WTC11 (cell line): ENCODE measurements at regions of chr7 and their contacts with region 1.

Region 1: DNA sequence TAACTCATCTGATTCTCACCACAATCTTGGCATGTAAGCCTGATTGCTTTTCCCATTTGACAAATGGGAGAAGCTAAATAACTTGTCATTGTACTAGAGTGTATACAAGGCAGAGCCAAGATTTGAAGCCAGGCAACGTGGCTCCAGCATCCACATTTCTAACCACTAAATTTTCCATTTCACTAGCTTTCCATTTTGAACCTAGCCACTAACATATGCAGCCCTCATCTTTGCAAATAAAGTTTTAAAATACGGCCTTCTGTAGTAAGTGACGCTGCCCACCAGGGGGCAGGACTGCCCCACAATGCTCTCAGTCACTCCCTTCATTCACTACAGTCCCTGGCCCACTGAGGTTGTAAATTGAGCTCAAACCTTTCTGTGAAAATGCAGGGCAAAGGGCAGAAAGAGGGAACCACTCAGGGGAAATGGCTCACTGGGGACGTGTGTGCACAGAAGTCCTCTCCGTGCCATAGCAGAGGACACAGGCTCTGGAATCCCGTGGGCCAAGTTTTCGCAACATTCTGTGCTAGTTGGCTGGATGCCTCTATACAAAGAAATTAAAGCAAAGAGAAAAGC is 315.7 kb downstream of the TNS3 start:
- DNase-seq: peak; percentile 64
- ATAC-seq: peak; percentile 97
- H3K4me3 Mint-ChIP-seq: no peak overlapping the region
- H3K27ac Mint-ChIP-seq: no peak overlapping the region
- H3K4me1 Mint-ChIP-seq: peaks cover 3% of the 10 kb centered on the region
- H3K27me3 Mint-ChIP-seq: no peaks in the 10 kb centered on the region
- CTCF ChIP-seq: peak; percentile 89

Region 2: DNA sequence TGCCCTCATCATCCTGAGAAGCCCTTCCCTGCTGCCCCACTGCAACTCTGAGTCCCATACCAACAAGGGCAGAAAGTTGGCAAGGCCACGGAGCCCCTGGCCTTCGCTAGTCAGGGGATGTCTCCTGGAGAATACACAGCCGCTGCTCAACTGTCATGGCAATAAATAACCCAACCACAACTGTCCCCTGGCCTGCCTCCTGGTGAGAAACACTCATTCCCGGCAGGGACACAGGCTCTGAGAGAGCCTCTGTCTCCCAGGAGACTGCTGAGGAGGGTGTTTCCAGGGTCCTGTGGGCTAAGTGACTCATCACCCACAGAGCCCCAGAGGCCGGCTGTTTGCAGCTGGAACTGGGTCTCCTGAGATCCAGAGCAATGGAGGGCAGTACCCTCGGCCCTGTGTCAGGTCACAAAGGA is 38.4 kb before region 1 on chr7:
- CTCF ChIA-PET with region 1: no interaction called
- POLR2A ChIA-PET with region 1: no interaction called
- DNase-seq: no peak
- ATAC-seq: no peak
- H3K4me3 Mint-ChIP-seq: no peak overlapping the region
- H3K27ac Mint-ChIP-seq: no peak overlapping the region
- H3K4me1 Mint-ChIP-seq: no peaks in the 10 kb centered on the region
- H3K27me3 Mint-ChIP-seq: no peaks in the 10 kb centered on the region
- CTCF ChIP-seq: no peak

Region 3: DNA sequence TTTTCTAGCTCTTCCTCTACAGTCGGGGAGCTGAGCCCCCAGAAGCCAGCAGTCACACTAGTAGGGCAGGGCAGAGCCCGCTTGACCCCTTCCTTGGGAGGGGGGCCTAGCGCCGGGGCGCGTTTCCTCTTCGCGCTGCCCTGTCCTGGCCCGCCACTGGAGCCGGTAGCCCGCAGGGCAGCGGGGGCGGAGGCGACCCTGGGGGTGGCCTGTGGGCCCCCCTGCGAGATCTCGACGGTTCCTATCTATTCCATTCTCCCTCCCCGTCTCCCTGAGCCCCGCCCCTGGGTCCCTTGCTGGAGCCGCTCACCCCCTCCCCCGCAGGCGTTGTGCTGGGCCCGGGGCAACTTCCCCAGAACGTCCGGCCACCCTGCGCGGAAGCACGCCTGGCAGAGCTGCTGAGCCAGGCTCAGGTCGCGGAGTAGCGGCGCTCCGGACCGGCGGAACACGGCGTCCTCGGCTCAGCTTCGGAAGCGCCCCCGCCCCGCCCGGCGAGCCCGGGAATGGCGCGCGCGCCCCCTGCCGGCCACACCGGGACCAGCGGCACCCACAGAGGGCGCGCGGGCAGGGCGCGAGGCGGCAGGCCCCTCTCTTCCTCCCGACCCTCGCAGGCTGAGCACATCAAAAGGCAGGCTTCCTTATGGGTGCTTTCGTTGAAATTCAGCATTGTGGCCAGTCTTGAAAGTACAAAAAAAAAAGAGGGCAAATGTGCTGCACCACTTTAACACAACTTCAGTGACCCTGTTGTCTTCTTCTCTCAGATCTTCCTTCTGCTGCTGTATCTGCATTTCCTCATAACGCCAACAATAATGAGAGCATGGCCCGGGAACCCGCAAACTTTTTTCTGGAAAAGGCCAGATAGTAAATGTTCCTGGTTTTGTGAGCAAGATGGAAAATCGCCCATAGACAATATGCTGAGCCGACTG is 11.9 kb before region 1 on chr7:
- CTCF ChIA-PET with region 1: interaction called, 25 read pairs
- POLR2A ChIA-PET with region 1: no interaction called
- DNase-seq: peak; percentile 81
- ATAC-seq: peak; percentile 94
- H3K4me3 Mint-ChIP-seq: peak overlapping the region; percentile 75
- H3K27ac Mint-ChIP-seq: no peak overlapping the region
- H3K4me1 Mint-ChIP-seq: peaks cover 8% of the 10 kb centered on the region
- H3K27me3 Mint-ChIP-seq: peaks cover 29% of the 10 kb centered on the region
- CTCF ChIP-seq: peak; percentile 72

Region 4: DNA sequence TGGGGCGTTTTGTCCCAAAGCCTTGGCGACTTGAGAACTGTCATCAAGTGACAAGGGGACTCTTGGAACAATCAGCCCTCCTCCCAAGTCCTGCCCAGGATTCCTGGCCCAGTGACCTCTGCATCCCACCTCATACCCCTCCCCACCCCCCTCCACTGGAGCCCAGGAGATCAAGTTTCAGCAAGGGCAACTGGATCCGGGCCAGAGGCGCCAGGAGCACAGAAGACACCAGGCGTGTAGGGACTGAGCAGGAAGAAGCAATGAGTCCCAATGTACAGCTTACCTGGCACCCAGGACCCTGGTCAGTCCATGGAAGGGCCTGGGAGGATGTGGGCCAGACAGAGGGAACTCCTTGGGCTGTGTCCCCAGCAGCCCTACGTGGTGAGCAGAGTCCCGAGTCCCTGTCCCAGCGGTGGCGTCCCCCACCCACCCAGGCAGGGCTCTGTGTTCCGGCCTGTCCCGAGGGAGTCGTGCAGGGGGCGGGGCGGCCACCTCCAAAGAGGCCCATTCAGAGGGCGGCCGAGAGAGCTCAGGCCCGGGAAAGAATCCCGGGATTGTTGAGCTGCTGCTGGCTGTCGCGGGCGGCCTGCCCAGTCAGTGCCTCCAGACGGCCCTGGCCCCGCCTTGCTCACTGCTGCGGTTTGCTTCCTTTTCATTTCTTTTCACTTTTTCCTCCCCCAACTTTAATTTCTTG is 61.6 kb after region 1 on chr7:
- CTCF ChIA-PET with region 1: interaction called, 11 read pairs
- POLR2A ChIA-PET with region 1: no interaction called
- DNase-seq: peak; percentile 87
- ATAC-seq: peak; percentile 79
- H3K4me3 Mint-ChIP-seq: peak overlapping the region; percentile 60
- H3K27ac Mint-ChIP-seq: peak overlapping the region; percentile 98
- H3K4me1 Mint-ChIP-seq: peaks cover 66% of the 10 kb centered on the region
- H3K27me3 Mint-ChIP-seq: no peaks in the 10 kb centered on the region
- CTCF ChIP-seq: no peak

Region 5: DNA sequence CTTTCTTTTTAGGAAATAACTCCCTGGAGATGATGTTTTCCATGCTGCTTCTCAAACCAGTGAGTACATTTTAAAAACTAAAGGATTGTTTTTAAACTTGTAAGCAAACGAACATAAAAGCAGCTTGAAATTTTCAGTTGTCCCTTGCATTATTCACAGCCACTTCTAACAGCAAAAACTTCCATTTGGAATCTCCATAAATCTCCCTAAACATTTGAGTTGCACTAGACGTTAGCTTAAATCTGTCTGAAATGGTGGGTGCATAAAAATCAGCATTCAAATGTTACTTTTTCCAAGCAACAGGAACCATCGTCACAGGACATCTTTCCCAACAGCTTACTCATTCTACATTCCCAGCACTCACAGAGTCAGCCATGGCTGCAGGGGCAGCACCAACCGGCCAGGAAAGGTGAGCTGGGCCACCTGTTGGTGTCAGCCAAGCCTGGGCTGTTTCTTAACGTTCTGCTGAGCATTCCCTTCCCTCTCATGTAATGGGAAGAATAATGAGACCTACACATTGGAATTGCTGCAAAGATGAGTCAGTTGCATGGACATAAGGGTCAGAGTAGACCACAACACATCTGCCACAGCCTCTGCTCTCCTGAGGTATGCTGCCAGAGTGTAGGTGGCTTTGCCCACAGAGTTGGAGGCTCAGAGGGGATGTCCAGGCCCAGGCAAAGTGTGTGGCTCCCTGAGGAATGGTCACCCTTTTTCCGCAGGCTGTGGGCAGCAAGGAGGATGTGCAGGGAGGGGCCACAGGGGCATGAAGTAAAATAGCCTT is 152.6 kb after region 1 on chr7:
- CTCF ChIA-PET with region 1: interaction called, 10 read pairs
- POLR2A ChIA-PET with region 1: no interaction called
- DNase-seq: no peak
- ATAC-seq: no peak
- H3K4me3 Mint-ChIP-seq: no peak overlapping the region
- H3K27ac Mint-ChIP-seq: no peak overlapping the region
- H3K4me1 Mint-ChIP-seq: peaks cover 10% of the 10 kb centered on the region
- H3K27me3 Mint-ChIP-seq: no peaks in the 10 kb centered on the region
- CTCF ChIP-seq: no peak

Region 6: GRCh38 chr7:47482013-47482875 is 216.0 kb after region 1 on chr7:
- CTCF ChIA-PET with region 1: interaction called, 11 read pairs
- POLR2A ChIA-PET with region 1: no interaction called
- DNase-seq: no peak
- ATAC-seq: no peak
- H3K4me3 Mint-ChIP-seq: no peak overlapping the region
- H3K27ac Mint-ChIP-seq: no peak overlapping the region
- H3K4me1 Mint-ChIP-seq: peaks cover 54% of the 10 kb centered on the region
- H3K27me3 Mint-ChIP-seq: peaks cover 88% of the 10 kb centered on the region
- CTCF ChIP-seq: no peak

Region 7: DNA sequence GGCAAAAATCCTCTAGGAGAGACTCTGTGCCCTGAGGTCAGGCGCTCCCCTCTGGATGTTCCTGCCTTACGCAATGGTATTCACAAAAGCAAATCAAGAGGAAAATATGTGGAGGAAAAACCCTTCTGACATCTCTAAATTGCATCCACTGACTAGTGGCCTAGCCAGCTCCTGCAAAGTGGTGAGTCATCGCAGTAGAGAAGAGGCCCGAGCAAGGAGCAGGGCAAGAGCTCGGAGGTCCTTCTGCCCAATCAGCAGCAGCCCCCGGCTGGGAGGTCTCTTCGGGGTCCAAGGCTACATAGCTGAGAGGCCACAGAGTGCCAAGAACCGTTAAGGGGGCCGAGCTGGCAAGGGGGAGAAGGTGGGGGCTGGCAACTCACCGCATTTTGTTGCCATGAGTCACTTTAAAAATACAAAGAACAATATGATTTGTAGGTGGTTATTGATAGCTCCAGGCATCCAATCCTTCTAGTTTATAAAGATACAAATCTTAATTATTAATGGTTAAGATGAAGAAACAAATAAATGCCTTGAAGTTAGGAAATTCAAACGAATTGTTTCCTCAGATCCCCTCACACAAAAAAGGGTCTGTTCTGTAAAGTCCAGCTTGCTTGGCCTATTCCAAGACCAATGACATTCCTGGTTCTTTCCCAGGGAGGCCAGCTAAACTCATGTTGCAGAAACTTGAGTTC is 520.5 kb after region 1 on chr7:
- CTCF ChIA-PET with region 1: interaction called, 12 read pairs
- POLR2A ChIA-PET with region 1: no interaction called
- DNase-seq: peak; percentile 25
- ATAC-seq: peak; percentile 93
- H3K4me3 Mint-ChIP-seq: no peak overlapping the region
- H3K27ac Mint-ChIP-seq: 0 out of 2 replicates have a peak overlapping the region, but pooled peaks have one; percentile 53
- H3K4me1 Mint-ChIP-seq: peaks cover 12% of the 10 kb centered on the region
- H3K27me3 Mint-ChIP-seq: no peaks in the 10 kb centered on the region
- CTCF ChIP-seq: no peak

Region 8: GRCh38 chr7:47937065-47937683 is 671.0 kb after region 1 on chr7:
- CTCF ChIA-PET with region 1: interaction called, 20 read pairs
- POLR2A ChIA-PET with region 1: no interaction called
- DNase-seq: no peak
- ATAC-seq: peak; percentile 14
- H3K4me3 Mint-ChIP-seq: no peak overlapping the region
- H3K27ac Mint-ChIP-seq: peak overlapping the region; percentile 33; the same call in 1 of the 2 replicates
- H3K4me1 Mint-ChIP-seq: peaks cover 45% of the 10 kb centered on the region
- H3K27me3 Mint-ChIP-seq: no peaks in the 10 kb centered on the region
- CTCF ChIP-seq: no peak